ENCODE measurements at regions of chr11 and their contacts with region 1.

Region 1: DNA sequence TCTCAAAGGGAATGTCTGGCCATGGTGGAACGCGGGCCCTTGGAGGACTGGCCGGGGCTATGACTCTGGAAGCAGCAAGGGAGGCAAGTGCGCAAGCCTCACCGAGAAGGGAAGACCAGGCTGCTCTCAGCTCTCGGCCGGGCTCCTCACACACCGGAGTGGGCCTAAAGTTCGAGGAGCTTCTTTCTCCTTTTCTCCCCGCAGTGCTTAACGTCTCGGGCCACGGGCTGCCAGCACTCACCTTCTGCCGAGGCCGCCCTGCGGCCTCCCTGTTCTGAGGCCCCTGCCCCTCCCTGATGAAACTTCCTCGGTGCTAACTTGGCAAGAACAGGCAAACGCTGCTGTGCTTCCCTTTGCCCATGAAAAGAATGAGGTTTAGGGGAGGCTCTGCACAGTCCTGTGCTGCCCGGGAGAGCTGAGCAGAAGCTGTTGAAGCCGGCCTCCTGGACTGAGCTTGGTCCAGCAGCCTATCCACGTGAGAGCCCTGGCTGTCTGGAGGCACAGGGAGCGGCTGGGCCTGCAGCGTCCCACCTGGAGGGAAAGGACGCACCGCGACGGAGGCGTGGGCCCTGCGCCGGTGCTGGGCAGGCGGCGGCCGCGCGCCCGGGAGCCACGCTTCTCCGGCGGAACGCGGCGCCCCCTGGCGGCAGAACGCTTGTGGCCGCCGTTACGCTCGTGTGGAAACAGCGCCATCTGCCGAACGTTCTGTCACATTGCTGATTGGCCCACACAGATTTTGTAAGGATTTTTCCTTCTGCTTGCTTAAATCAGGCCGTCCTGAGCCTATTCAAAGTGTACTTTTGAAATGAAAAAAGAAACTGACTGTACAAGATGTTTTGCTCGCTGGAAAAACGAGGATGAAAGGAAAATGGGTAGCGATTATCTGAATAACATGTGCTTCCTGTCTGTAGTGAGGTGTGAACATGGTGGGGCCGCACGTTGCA is 65.0 kb upstream of the TMEM45B start:
- DNase-seq: peak; percentile 82
- H3K4me3 Mint-ChIP-seq: peak overlapping the region; percentile 23
- H3K27ac Mint-ChIP-seq: no peak overlapping the region
- H3K4me1 Mint-ChIP-seq: peaks cover 2% of the 10 kb centered on the region
- H3K27me3 Mint-ChIP-seq: no peaks in the 10 kb centered on the region

Region 2: DNA sequence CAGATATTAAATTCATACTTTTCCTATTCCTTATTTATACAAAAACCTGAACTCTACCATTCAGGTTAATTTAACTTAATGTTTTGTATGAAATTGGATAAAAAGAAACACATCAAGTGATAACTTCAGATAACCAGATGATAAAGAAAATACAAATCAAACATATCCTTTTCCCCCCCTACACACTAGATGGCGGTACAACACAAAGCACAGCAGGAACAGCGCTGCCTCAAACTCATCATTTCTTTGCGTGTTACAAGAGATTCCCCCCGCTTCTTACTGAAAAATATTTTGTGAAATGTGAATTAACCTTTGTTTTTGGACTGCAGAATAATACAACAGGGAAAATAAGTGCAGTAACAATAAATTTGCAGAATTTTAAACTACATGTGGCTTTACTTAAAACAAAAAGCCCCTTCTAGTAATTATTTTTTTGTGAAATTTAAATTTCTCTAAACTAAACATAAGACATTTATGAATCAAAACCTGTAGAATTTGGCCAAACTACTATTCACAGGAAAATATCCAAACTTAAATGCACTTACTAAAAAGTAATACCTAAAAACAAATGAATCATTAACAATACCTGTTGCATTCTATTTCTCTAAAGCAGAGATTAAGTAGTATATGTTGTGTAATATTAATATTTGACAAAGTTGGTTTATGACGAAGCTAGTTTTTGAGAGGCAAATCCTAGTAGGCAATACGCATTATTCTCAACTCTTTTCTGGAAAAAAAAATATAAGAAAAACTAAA is 632.8 kb before region 1 on chr11:
- CTCF ChIA-PET with region 1: no interaction called
- intact Hi-C with region 1: loop called (anchors 1 kb)
- DNase-seq: peak; percentile 64
- H3K4me3 Mint-ChIP-seq: no peak overlapping the region
- H3K27ac Mint-ChIP-seq: no peak overlapping the region
- H3K4me1 Mint-ChIP-seq: peaks cover 3% of the 10 kb centered on the region
- H3K27me3 Mint-ChIP-seq: no peaks in the 10 kb centered on the region

Region 3: DNA sequence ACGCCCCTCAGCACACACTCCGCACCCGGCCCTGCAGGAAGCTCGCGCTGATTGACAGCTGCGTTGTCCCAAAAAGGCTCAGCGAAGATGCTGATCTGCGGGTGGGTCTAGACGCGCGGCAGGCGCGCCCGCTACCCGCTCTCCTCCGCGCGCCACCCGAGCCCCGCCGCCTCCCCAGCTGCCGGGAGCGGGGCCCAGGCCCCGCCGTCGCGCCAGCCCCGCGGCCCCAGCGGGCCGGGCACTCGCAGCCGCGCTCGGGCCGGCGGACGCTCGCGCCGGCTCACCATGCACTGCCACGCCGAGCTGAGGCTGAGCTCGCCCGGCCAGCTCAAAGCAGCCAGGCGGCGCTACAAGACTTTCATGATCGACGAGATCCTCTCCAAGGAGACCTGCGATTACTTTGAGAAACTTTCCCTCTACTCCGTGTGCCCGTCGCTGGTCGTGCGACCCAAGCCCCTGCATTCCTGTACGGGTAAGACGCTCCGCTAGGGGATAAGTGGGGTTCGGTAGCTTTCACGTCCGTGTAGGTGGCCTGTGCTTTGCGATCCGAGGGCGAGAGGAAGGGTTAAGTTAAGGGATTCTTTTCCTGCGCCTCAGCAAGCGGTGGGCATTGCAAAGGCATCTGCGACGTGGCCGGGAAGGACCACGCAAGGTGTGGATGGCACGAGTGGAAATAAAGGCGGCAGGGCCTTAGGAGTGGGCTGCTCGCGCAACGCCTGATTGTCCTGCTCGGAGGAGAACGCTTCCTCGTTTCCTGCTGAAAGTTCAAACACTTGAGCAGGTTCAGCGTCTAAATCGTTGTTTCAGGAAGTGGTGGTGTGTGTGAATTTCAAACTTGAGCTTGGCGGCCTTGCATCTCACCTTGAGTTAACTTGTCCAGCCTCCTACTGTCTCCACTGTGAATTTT is 374.6 kb before region 1 on chr11 and contains the start of gene BARX2:
- CTCF ChIA-PET with region 1: interaction called, 33 read pairs
- intact Hi-C with region 1: loop called (anchors 1 kb)
- DNase-seq: peak; percentile 77
- H3K4me3 Mint-ChIP-seq: peak within 1 kb of the TSS; percentile 71
- H3K27ac Mint-ChIP-seq: no peak within 1 kb of the TSS
- H3K4me1 Mint-ChIP-seq: peaks cover 24% of the 10 kb centered on the region
- H3K27me3 Mint-ChIP-seq: peaks cover 70% of the 10 kb centered on the region
- total RNA-seq, gene BARX2: 3.2 to 3.8 TPM

Region 4: DNA sequence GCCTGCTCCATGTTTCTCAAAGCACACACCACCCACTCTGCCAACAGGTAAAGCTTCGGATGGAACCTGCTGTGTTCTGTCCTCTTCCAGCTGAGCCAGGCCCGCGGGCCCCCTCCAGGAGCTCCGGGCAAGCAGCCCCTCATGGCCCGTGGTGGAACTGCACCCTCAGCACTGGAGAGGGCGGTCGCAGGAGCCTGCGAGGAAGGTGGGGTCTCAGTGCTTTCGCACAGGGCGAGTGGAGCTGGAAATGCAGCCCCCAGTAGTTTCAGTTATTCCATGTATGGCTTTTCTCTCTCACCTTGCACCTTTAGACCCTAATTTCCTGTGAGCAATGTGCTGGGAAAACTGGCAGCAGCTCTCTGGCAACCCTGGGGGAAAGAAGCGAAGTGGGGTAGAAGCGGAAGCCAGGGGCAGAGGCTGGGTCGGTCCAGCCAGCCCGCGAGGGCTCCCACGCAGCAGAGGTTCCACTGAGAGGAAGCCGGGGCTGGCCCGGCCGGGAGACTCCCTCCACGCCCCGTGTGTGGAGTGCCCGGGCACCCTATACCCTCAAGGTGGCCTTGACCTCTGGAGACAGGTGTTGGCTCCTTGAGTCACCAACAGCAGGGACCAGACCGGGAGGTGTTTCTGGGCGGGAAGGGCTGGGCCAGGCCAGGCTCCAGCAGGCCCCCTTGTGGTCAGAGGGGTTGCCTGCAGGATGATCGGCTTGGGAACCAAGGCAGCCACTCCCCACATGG is 54.9 kb before region 1 on chr11:
- CTCF ChIA-PET with region 1: interaction called, 11 read pairs
- intact Hi-C with region 1: loop called (anchors 1 kb)
- DNase-seq: peak; percentile 80
- H3K4me3 Mint-ChIP-seq: peak overlapping the region; percentile 71
- H3K27ac Mint-ChIP-seq: peak overlapping the region; percentile 44
- H3K4me1 Mint-ChIP-seq: peaks cover 12% of the 10 kb centered on the region
- H3K27me3 Mint-ChIP-seq: no peaks in the 10 kb centered on the region

Measured in activated naive CD4-positive, alpha-beta T cell treated with anti-CD3 and anti-CD28 coated beads for 36 hours (primary cell).